ENCODE measurements at regions of chr1 and their contacts with region 1.

Region 1: GRCh38 chr1:64675718-64676345 is 69.0 kb upstream of the RAVER2 start:
- DNase-seq: peak in 2 of 5 donors; percentile 2 to 5
- H3K4me3 ChIP-seq: no peak overlapping the region
- H3K4me3 Mint-ChIP-seq: no peak overlapping the region
- H3K27ac ChIP-seq: no peak overlapping the region
- H3K27ac Mint-ChIP-seq: no peak overlapping the region
- H3K4me1 ChIP-seq: no peaks in the 10 kb centered on the region
- H3K4me1 Mint-ChIP-seq: peaks cover 0 to 1% (median 0%) of the 10 kb centered on the region in 4 donors
- H3K27me3 ChIP-seq: no peaks in the 10 kb centered on the region
- H3K27me3 Mint-ChIP-seq: peaks cover 0 to 5% of the 10 kb centered on the region in 2 donors

Region 2: GRCh38 chr1:64268653-64269557 is 406.9 kb before region 1 on chr1:
- CTCF ChIA-PET with region 1: interaction called, 22 read pairs
- POLR2A ChIA-PET with region 1: no interaction called
- intact Hi-C with region 1: no loop called
- DNase-seq: peak; percentile 47 to 62 (median 54)
- H3K4me3 ChIP-seq: no peak overlapping the region
- H3K4me3 Mint-ChIP-seq: no peak overlapping the region
- H3K27ac ChIP-seq: no peak overlapping the region
- H3K27ac Mint-ChIP-seq: peak overlapping the region in 1 of 7 donors; percentile 26
- H3K4me1 ChIP-seq: no peaks in the 10 kb centered on the region
- H3K4me1 Mint-ChIP-seq: no peaks in the 10 kb centered on the region
- H3K27me3 ChIP-seq: peaks cover 4% of the 10 kb centered on the region
- H3K27me3 Mint-ChIP-seq: peaks cover 9 to 22% of the 10 kb centered on the region in 2 donors

Region 3: DNA sequence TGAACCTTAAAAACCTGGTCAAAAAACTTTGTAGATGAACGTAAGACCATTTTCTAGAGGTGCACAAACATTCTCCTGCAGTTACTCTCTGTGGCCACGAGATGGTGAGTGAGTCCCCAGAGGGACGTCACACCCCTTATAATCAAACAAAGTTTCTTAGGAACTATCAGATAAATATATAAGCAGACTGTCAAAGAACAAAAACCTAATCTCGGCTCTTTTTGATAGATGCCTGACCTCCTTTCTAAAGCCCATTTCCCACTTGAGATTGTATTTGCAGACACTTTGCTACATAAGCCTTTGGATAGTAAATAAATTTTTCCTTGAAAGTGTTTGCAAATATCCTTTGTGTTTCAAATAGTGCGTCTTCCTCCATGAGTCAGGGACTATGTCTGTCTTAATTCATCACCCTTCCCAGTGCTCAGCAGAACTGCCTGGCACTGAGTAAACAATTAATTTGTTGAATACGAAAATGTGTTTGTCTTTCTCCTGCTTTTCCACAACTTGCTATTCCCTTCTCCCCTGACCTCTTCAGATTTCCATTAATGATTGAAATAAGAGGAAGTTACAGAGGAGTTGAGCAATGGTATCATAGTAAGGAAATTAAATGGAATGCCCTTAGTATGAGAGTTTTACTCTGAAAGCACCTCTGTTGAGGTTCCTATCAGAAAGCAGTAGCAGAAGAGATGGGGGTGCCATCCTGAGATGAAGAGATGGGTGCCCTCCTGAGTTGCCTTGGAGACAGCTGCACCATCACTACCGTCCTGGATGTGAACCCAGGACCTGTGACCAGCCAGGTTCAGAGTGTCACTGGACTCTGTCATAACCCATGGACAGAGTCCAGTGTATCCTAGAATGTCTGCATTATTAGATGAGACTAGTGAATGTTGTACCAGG is 11.2 kb after region 1 on chr1:
- CTCF ChIA-PET with region 1: interaction called, 31 read pairs
- POLR2A ChIA-PET with region 1: no interaction called
- intact Hi-C with region 1: no loop called
- DNase-seq: peak; percentile 38 to 47 (median 40)
- H3K4me3 ChIP-seq: no peak overlapping the region
- H3K4me3 Mint-ChIP-seq: no peak overlapping the region
- H3K27ac ChIP-seq: no peak overlapping the region
- H3K27ac Mint-ChIP-seq: no peak overlapping the region
- H3K4me1 ChIP-seq: no peaks in the 10 kb centered on the region
- H3K4me1 Mint-ChIP-seq: no peaks in the 10 kb centered on the region
- H3K27me3 ChIP-seq: no peaks in the 10 kb centered on the region
- H3K27me3 Mint-ChIP-seq: peaks cover 0 to 5% of the 10 kb centered on the region in 2 donors

Measured in CD4-positive, alpha-beta memory T cell (primary cell).